Activated T-helper 2 cell treated with anti-CD3 and anti-CD28 coated beads, Interferon-gamma antibody, Interleukin-2, Interleukin-4, amounts not matched to agents 10 μg/mL and 5 μg/mL and 100 μg/mL, durations not matched to agents 14 hours and 24 hours and 36 hours (primary cell): ENCODE measurements at regions of chr9 and their contacts with region 1.

Region 1: GRCh38 chr9:91253488-91253887 is 108.2 kb downstream of the AUH start:
- DNase-seq: peak; percentile 67
- H3K4me3 Mint-ChIP-seq: no peak overlapping the region
- H3K27ac Mint-ChIP-seq: no peak overlapping the region
- H3K4me1 Mint-ChIP-seq: peaks cover 62% of the 10 kb centered on the region
- H3K27me3 Mint-ChIP-seq: no peaks in the 10 kb centered on the region

Region 2: GRCh38 chr9:90914868-90915483 is 338.5 kb before region 1 on chr9:
- intact Hi-C with region 1: loop called (anchors 5 kb)
- DNase-seq: peak; percentile 54
- H3K4me3 Mint-ChIP-seq: no peak overlapping the region
- H3K27ac Mint-ChIP-seq: peak overlapping the region; percentile 62
- H3K4me1 Mint-ChIP-seq: peaks cover 14% of the 10 kb centered on the region
- H3K27me3 Mint-ChIP-seq: no peaks in the 10 kb centered on the region

Region 3: GRCh38 chr9:91036826-91037510 is 216.5 kb before region 1 on chr9:
- intact Hi-C with region 1: loop called (anchors 2 kb)
- DNase-seq: peak; percentile 79
- H3K4me3 Mint-ChIP-seq: peak overlapping the region; percentile 49
- H3K27ac Mint-ChIP-seq: peak overlapping the region; percentile 88
- H3K4me1 Mint-ChIP-seq: peaks cover 61% of the 10 kb centered on the region
- H3K27me3 Mint-ChIP-seq: no peaks in the 10 kb centered on the region

Region 4: DNA sequence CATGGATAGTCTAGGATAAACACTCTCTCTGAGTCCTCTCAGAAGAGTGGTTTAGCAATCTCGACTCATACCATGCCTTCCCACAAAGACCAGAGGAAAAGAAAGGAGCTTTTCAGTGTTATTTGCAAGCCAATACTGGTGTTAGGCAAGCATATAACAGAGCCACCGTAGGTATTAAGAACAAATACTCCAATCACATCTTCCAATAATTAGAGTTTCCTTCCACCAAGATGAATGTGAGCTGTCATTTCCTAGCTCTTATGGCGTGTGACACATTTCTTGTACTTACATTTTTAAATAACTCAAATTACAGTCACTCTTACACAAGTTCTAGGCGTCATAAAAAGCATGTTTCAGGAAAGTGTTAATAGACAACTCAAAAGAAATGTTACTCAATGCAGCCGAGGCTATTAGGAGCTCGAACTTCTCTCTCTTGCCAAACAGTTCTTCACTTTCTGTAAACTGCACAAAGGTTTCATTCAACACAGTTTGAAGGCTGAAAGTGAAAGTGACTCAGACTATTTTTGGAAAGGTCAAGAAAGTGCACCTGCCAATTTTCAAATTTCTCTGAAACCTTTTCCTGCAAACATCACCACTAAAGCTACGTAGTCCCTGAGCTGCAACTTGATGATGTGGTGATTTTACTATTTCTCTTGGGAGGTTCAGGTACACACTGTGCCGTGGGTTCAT is 45.6 kb before region 1 on chr9:
- intact Hi-C with region 1: loop called (anchors 2 kb)
- DNase-seq: no peak
- H3K4me3 Mint-ChIP-seq: peak overlapping the region; percentile 49
- H3K27ac Mint-ChIP-seq: peak overlapping the region; percentile 93
- H3K4me1 Mint-ChIP-seq: peaks cover 67% of the 10 kb centered on the region
- H3K27me3 Mint-ChIP-seq: no peaks in the 10 kb centered on the region

Region 5: GRCh38 chr9:91359734-91360470 is 106.4 kb after region 1 on chr9:
- intact Hi-C with region 1: loop called (anchors 1 kb)
- DNase-seq: no peak
- H3K4me3 Mint-ChIP-seq: peak overlapping the region; percentile 98
- H3K27ac Mint-ChIP-seq: peak overlapping the region; percentile 99
- H3K4me1 Mint-ChIP-seq: peaks cover 64% of the 10 kb centered on the region
- H3K27me3 Mint-ChIP-seq: no peaks in the 10 kb centered on the region

Region 6: DNA sequence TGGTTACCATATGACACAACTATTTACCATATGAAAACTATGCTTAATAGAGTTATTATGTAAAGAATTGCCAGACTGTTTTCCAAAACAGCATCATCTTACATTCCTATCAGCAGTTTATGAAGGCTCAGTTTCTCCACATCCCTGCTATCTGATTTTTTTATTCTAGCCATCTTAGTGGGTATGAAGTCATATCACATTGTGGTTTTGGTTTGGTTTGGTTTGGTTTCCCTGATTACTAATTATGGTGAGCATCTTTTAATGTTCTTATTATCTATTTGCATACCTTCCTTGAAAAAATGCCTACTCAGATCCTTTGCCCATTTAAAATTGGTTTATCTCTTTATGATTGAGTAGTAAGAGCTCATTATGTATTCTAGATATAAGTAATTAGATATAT is 369.5 kb after region 1 on chr9:
- intact Hi-C with region 1: no loop called
- DNase-seq: no peak
- H3K4me3 Mint-ChIP-seq: no peak overlapping the region
- H3K27ac Mint-ChIP-seq: no peak overlapping the region
- H3K4me1 Mint-ChIP-seq: peaks cover 2% of the 10 kb centered on the region
- H3K27me3 Mint-ChIP-seq: peaks cover 51% of the 10 kb centered on the region